Natural killer cell (primary cell): ENCODE measurements at regions of chr16 and their contacts with region 1.

Region 1: DNA sequence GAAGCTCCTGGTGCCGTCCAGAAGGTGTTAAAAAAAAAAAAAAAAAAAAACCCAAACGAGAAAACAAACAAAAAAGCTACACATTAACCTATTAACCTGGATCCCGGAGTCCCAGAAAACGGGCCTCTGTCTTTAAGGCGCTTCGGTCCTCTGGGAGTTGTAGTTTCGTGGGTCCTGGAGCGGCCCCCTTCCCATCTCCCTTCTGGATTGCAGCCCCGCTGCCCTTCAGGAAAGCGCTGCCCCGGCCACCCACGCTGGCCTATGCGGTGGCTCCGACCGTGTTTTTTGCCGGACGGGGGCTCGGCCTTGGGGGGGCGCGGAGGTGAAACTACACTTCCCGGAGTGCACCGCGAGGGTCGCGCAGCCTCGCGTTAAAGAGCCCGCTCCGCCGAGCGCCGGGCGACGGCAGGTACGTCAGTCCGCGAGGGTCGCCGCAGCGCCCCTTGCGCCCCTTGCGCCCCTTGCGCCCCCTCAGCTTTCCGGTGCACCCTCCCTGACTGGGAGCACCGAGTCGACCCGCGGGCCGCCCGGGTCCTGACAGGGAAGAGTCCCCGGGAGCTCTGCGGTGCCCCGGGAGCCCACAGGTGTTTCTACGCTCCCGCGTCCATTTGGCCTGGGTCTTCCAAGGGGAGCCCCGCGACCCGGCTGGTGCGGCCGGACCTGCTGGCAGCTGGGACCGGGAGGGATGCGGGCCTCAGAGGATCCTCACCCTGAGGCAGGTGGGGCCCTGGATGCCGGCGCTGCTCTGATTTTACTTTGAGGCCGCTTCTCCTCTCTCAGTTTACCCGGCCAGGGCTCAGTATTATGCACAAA is at the start of gene FCSK:
- DNase-seq: peak; percentile 68 to 84
- ATAC-seq: peak; percentile 87 to 94 (median 92)
- H3K4me3 ChIP-seq: peak within 1 kb of the TSS; percentile 73
- H3K4me3 Mint-ChIP-seq: peak within 1 kb of the TSS; percentile 95
- H3K27ac ChIP-seq: peak within 1 kb of the TSS; percentile 89
- H3K27ac Mint-ChIP-seq: peak within 1 kb of the TSS; percentile 83 to 92
- H3K4me1 ChIP-seq: peaks cover 21% of the 10 kb centered on the region
- H3K4me1 Mint-ChIP-seq: peaks cover 10 to 20% of the 10 kb centered on the region in 2 donors
- H3K27me3 ChIP-seq: no peaks in the 10 kb centered on the region
- H3K27me3 Mint-ChIP-seq: no peaks in the 10 kb centered on the region
- CTCF ChIP-seq: no peak
- total RNA-seq, gene FCSK: 28.5 to 33.0 (median 29.6) TPM

Region 2: GRCh38 chr16:70380861-70381603 is 73.4 kb before region 1 on chr16:
- intact Hi-C with region 1: loop called (anchors 1 kb)
- DNase-seq: peak; percentile 92 to 98
- ATAC-seq: peak; percentile 93 to 98 (median 95)
- H3K4me3 ChIP-seq: peak overlapping the region; percentile 75
- H3K4me3 Mint-ChIP-seq: peak overlapping the region; percentile 99
- H3K27ac ChIP-seq: peak overlapping the region; percentile 69
- H3K27ac Mint-ChIP-seq: peak overlapping the region; percentile 90 to 91
- H3K4me1 ChIP-seq: peaks cover 29% of the 10 kb centered on the region
- H3K4me1 Mint-ChIP-seq: peaks cover 4 to 6% of the 10 kb centered on the region in 2 donors
- H3K27me3 ChIP-seq: no peaks in the 10 kb centered on the region
- H3K27me3 Mint-ChIP-seq: no peaks in the 10 kb centered on the region
- CTCF ChIP-seq: peak; percentile 17

Region 3: DNA sequence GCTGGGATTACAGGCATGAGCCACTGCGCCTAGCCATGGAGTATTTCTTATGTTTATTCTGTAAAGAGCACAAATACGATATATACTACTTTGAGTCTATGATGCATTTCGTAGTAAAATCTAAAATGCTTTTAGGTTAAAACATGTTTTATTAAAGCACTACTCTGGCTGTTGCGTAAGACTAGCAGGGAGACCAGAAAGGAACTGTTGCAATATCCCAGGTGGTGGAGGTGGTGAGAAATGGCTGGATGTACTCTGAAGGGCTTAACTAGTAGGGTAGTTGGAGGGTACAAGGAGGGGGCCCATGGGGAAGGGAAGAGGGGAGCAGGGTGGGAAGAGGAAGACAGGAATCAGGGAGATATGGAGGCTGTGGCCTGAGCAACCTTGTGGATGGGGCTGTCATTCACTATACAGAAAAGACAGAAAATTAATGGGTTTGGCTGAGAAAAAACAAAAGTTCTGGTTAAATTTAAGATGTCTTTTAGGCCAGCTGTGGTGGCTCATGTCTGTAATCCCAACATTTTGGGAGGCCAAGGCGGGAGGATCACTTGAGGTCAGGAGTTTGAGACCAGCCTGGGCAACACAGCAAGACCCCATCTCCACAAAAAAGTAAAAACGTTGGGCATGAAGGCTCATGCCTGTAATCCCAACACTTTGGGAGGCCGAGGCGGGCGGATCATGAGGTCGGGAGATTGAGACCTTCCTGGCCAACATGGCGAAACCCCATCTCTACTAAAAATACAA is 51.3 kb before region 1 on chr16:
- intact Hi-C with region 1: loop called (anchors 5 kb)
- DNase-seq: no peak
- ATAC-seq: no peak
- H3K4me3 ChIP-seq: no peak overlapping the region
- H3K4me3 Mint-ChIP-seq: peak overlapping the region; percentile 73
- H3K27ac ChIP-seq: no peak overlapping the region
- H3K27ac Mint-ChIP-seq: peak overlapping the region; percentile 53 to 86
- H3K4me1 ChIP-seq: peaks cover 28% of the 10 kb centered on the region
- H3K4me1 Mint-ChIP-seq: peaks cover 35 to 40% of the 10 kb centered on the region in 2 donors
- H3K27me3 ChIP-seq: no peaks in the 10 kb centered on the region
- H3K27me3 Mint-ChIP-seq: no peaks in the 10 kb centered on the region
- CTCF ChIP-seq: no peak

Region 4: DNA sequence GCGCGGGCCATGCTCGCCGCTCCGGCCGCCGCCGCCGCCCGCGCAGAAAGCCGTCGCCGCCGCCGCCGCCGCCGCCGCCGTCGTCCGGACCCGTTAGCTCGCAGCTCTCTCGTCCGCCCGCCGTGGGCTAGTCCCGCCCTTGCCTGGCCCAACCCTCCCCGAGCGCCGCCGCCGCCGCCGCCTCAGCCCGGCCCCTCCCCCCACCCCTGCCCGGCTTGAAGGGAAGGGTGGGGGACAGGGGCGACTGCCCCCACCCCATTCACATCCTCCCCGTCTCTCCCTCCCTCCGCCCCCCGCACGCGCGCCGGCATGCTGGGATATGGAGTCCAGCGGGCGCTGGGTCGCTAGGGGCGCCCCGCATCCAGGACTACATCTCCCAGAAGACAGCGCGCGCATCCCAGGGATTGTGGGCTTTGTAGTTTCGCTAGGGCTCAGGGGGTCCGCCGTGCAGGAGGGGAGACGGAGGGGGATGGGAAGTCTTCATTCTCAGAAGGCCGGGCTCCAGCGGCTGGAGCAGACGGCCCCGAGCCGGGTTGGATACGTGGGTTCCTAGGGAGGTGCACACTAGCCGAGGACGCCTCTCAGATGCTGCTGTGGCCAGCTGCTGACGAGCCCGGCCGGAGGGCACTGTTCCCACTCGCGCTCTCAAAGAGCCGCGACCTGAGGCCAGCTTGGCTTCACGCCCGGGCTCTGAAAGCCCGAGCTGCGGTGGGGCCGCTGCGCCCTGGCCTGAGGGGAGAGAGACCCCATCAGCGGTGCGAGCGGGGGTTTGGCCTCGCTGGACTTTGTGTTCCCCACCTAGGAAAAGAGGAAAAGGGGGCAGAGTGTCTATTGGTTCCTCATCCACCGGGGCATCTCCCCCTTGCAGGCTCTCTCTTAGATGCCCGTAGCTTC is 15.2 kb before region 1 on chr16 and contains the start of gene ST3GAL2:
- intact Hi-C with region 1: loop called (anchors 1 kb)
- DNase-seq: peak; percentile 85 to 95
- ATAC-seq: peak; percentile 96 to 99 (median 96)
- H3K4me3 ChIP-seq: peak within 1 kb of the TSS; percentile 66
- H3K4me3 Mint-ChIP-seq: peak within 1 kb of the TSS; percentile 96
- H3K27ac ChIP-seq: peak within 1 kb of the TSS; percentile 41
- H3K27ac Mint-ChIP-seq: peak within 1 kb of the TSS; percentile 74 to 89
- H3K4me1 ChIP-seq: peaks cover 25% of the 10 kb centered on the region
- H3K4me1 Mint-ChIP-seq: peaks cover 19 to 24% of the 10 kb centered on the region in 2 donors
- H3K27me3 ChIP-seq: no peaks in the 10 kb centered on the region
- H3K27me3 Mint-ChIP-seq: no peaks in the 10 kb centered on the region
- CTCF ChIP-seq: no peak
- total RNA-seq, gene ST3GAL2: 25.9 to 39.1 (median 36.9) TPM

Region 5: DNA sequence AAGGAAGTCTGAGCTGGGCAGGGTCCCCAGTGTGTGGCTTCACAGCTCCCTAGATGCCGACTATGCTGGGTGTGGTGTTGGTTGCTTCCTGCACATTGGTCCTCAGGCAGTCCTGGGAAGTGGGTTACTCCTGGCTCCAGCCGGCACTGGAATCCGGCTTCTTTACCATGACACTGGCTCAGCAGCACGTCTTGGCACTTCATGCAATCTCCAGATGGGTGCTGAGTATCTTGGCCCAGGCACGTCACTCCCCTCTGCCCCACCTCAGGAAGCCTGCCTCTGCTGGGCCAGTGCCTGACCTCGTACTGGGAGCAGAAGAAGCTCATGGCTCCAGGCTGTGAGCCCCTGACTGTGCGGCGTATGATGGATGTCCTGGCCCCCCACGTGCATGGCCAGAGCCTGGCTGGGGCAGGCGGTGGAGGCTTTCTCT is 24.5 kb after region 1 on chr16:
- intact Hi-C with region 1: no loop called
- DNase-seq: no peak
- ATAC-seq: no peak
- H3K4me3 ChIP-seq: no peak overlapping the region
- H3K4me3 Mint-ChIP-seq: no peak overlapping the region
- H3K27ac ChIP-seq: no peak overlapping the region
- H3K27ac Mint-ChIP-seq: peak overlapping the region; percentile 18 to 48
- H3K4me1 ChIP-seq: peaks cover 5% of the 10 kb centered on the region
- H3K4me1 Mint-ChIP-seq: no peaks in the 10 kb centered on the region
- H3K27me3 ChIP-seq: no peaks in the 10 kb centered on the region
- H3K27me3 Mint-ChIP-seq: no peaks in the 10 kb centered on the region
- CTCF ChIP-seq: no peak

Region 6: DNA sequence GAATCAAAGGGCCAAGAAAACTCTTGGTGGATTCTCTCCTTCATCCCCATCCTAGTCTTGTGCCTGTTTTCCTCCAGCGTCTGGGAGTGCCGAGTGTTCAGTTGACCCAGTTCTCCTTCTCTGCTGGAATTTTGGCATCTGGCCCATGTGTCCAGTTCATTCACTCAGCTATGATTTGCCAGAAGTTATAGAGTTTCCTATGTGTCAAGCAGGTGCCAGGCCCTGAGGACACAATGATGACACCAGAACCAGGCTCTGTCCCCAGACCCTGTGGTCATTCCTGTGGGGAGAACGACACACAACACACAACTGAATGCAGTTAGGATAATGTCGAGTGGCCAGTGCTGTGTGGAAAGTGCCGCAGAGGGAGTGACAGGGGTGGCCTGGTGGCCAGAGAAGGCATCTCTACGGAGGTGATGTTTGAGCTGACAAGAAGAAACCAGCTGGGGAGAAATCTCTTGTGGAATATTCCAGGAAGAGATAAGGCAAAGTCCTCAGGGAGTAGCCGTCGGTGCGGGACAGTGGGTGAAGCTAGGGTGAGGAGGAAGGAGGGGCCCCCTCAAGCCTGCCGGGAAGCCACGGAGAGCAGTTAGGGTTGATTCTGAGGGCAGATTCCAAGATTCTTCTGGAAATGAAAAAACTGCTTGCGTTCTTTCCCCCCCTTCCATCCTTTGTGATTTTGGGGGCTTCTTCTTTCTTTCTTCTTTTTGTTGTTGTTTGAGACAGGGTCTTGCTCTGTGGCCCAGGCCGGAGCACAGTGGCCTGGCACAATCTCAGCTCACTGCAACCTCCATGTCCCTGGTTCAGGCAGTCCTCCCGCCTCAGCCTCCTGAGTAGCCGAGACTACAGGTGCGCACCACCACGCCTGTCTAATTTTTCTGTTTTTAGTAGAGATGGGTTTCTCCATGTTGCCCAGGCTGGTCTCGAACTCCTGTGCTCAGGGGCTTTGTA is 156.1 kb after region 1 on chr16:
- intact Hi-C with region 1: no loop called
- DNase-seq: no peak
- ATAC-seq: no peak
- H3K4me3 ChIP-seq: no peak overlapping the region
- H3K4me3 Mint-ChIP-seq: no peak overlapping the region
- H3K27ac ChIP-seq: no peak overlapping the region
- H3K27ac Mint-ChIP-seq: no peak overlapping the region
- H3K4me1 ChIP-seq: no peaks in the 10 kb centered on the region
- H3K4me1 Mint-ChIP-seq: no peaks in the 10 kb centered on the region
- H3K27me3 ChIP-seq: no peaks in the 10 kb centered on the region
- H3K27me3 Mint-ChIP-seq: no peaks in the 10 kb centered on the region
- CTCF ChIP-seq: no peak